ENCODE measurements at regions of chr1 and their contacts with region 1.

Region 1: GRCh38 chr1:99526926-99527477 is 118.9 kb upstream of the PALMD start:
- DNase-seq: no peak
- ATAC-seq: peak; percentile 53; the same call in 1 of the 2 replicates
- H3K4me3 Mint-ChIP-seq: no peak overlapping the region
- H3K27ac Mint-ChIP-seq: no peak overlapping the region
- H3K4me1 Mint-ChIP-seq: peaks cover 26% of the 10 kb centered on the region
- H3K27me3 Mint-ChIP-seq: no peaks in the 10 kb centered on the region
- CTCF ChIP-seq: no peak

Region 2: DNA sequence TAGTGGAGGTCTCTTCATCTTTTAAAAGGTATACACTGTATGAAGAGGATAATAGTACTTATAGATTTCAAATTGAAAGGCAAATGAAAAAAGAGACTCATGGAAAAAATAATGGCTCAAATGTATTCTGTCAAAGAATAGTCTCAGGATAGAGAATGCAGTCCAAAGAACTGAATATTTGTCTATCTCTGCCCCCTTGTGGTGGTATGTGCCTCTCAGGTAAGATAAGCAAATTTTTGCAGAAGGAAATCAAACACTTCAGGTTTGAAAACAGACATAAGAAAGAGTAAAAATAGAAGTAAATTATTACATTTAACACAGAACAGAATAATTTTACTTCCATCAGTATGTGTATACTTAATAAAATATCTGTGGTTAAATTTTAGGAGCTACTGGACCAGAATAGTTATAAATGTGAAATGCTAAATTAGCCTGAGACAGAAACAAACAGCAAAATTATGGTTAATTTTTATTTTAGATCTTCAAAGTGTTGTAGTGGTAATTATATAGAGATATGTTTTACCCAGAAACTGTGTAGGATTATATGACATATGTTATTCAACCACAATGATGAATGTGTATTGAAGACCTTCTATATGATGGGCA is 45.5 kb before region 1 on chr1:
- CTCF ChIA-PET with region 1: interaction called, 10 read pairs
- POLR2A ChIA-PET with region 1: no interaction called
- DNase-seq: peak; percentile 25
- ATAC-seq: peak; percentile 55
- H3K4me3 Mint-ChIP-seq: no peak overlapping the region
- H3K27ac Mint-ChIP-seq: no peak overlapping the region
- H3K4me1 Mint-ChIP-seq: no peaks in the 10 kb centered on the region
- H3K27me3 Mint-ChIP-seq: no peaks in the 10 kb centered on the region
- CTCF ChIP-seq: peak; percentile 54

Region 3: DNA sequence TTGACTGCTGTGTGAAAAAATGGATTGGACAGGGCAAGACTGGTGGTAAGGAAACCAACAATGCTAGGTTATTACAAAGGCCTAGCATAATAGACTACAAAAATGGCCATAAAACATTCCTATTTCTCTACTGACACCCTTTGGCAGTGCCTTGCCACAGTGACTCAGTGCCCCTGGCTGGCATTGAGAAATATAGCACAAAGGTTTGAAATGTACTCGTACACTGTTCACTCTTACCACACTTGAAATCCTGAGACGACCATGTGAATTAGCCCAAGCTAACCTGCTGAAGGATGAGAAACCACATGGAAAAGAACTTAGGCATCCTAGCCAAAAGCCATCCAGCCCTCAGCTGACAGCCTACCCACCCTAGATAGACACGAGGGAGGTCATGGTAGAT is 30.9 kb before region 1 on chr1:
- CTCF ChIA-PET with region 1: no interaction called
- POLR2A ChIA-PET with region 1: no interaction called
- DNase-seq: no peak
- ATAC-seq: no peak
- H3K4me3 Mint-ChIP-seq: no peak overlapping the region
- H3K27ac Mint-ChIP-seq: no peak overlapping the region
- H3K4me1 Mint-ChIP-seq: peaks cover 26% of the 10 kb centered on the region
- H3K27me3 Mint-ChIP-seq: no peaks in the 10 kb centered on the region
- CTCF ChIP-seq: no peak

Region 4: GRCh38 chr1:99613716-99614115 is 86.7 kb after region 1 on chr1:
- CTCF ChIA-PET with region 1: no interaction called
- POLR2A ChIA-PET with region 1: no interaction called
- DNase-seq: no peak
- ATAC-seq: no peak
- H3K4me3 Mint-ChIP-seq: no peak overlapping the region
- H3K27ac Mint-ChIP-seq: no peak overlapping the region
- H3K4me1 Mint-ChIP-seq: no peaks in the 10 kb centered on the region
- H3K27me3 Mint-ChIP-seq: no peaks in the 10 kb centered on the region
- CTCF ChIP-seq: no peak